K562 (cell line): ENCODE measurements at regions of chr6 and their contacts with region 1.

Region 1: DNA sequence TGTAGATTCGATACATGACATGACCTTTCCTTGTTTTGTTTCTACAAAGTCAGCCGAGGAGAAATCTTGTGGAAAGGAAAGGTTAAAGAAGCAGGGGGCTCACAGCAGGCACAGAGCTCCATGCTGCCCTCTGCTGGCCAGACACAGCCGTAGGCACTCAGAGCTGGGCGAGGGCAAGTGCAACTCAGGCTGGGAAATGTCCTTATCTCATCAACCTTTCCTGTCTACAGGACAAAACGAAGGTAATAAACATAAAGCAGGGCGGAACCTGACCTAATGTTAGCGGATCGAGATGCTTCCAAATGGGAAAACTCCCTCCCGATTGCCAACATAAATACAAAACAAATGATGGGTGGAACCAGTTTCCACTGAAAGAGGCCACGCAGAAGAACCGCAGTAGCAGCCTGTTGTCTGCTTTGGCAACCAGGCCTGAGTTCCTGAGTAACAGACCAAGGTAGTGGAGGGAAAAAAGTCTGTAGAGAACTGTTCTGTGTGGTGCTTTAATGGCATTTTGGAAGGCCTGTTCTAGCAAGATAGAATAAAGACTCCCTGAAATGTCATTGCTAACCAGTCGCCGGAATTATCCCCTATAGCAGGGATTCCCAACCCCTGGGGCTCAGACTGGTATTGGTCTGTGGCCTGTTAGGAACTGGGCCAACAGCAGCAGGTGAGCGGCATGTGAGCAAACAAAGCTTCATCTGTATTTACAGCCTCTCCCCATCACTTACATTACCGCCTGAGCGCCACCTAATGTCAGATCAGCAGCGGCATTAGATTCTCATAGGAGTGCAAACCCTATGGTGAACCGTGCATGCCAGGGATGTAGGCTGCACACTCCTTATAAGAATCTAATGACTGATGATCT is 85.2 kb downstream of the MBOAT1 start:
- DNase-seq: peak; percentile 83 to 87 (median 86)
- ATAC-seq: peak; percentile 99
- H3K4me3 ChIP-seq: no peak overlapping the region
- H3K27ac ChIP-seq: no peak overlapping the region
- H3K4me1 ChIP-seq: peaks cover 0 to 7% of the 10 kb centered on the region in 2 experiments; a peak in 2 of 5 replicates
- H3K27me3 ChIP-seq: no peaks in the 10 kb centered on the region
- CTCF ChIP-seq: peak; percentile 93 to 99 (median 95)
- EP300 ChIP-seq: no peak
- POLR2A ChIP-seq: no peak
- RAD21 ChIP-seq: peak; percentile 58 to 79

Region 2: GRCh38 chr6:20279608-20280287 is 152.7 kb after region 1 on chr6:
- CTCF ChIA-PET with region 1: no interaction called
- POLR2A ChIA-PET with region 1: no interaction called
- in situ Hi-C with region 1: loop called (anchors 10 kb)
- intact Hi-C with region 1: no loop called
- DNase-seq: no peak
- ATAC-seq: peak; percentile 41
- H3K4me3 ChIP-seq: no peak overlapping the region
- H3K27ac ChIP-seq: no peak overlapping the region
- H3K4me1 ChIP-seq: peaks cover 0 to 11% of the 10 kb centered on the region in 2 experiments; a peak in 3 of 5 replicates
- H3K27me3 ChIP-seq: no peaks in the 10 kb centered on the region
- CTCF ChIP-seq: no peak
- EP300 ChIP-seq: no peak
- POLR2A ChIP-seq: no peak
- RAD21 ChIP-seq: no peak

Region 3: DNA sequence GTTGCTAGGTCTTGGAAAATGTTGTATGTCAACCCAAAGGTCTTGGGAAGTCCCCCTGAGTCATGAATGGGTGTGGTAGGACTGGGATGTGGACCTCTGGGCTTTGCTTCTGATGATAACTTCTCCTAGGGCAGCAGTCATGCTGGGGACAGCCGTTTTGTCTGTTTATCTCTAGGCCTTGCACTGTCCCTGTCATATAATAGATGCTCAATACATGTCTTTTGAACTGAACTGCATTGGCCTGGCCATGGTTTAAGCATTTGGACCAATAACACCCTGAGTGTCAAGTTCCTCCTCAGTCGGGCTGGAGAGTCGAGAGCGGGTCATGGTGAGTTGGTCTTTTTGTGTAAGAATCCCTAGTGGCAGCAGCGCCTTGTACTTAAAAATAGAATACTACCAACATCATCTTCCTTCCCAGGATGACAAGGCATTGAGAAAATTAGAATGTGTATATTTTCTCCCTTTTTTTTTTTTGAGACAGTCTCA is 317.8 kb after region 1 on chr6:
- CTCF ChIA-PET with region 1: no interaction called
- POLR2A ChIA-PET with region 1: no interaction called
- in situ Hi-C with region 1: no loop called
- intact Hi-C with region 1: no loop called
- DNase-seq: peak; percentile 60 to 94 (median 74)
- ATAC-seq: peak; percentile 89
- H3K4me3 ChIP-seq: no peak overlapping the region
- H3K27ac ChIP-seq: peak overlapping the region; percentile 70
- H3K4me1 ChIP-seq: peaks cover 21 to 48% of the 10 kb centered on the region in 2 experiments; a peak in 4 of 5 replicates
- H3K27me3 ChIP-seq: no peaks in the 10 kb centered on the region
- CTCF ChIP-seq: no peak
- EP300 ChIP-seq: peak; percentile 87; the same call in 1 of the 2 replicates
- POLR2A ChIP-seq: no peak
- RAD21 ChIP-seq: no peak